Cardiac septum (tissue), 1 donor: ENCODE measurements at regions of chr1 and their contacts with region 1.

Region 1: GRCh38 chr1:168728473-168729404 is at the start of gene DPT:
- DNase-seq: no peak
- total RNA-seq, gene DPT: 32.1 TPM

Region 2: DNA sequence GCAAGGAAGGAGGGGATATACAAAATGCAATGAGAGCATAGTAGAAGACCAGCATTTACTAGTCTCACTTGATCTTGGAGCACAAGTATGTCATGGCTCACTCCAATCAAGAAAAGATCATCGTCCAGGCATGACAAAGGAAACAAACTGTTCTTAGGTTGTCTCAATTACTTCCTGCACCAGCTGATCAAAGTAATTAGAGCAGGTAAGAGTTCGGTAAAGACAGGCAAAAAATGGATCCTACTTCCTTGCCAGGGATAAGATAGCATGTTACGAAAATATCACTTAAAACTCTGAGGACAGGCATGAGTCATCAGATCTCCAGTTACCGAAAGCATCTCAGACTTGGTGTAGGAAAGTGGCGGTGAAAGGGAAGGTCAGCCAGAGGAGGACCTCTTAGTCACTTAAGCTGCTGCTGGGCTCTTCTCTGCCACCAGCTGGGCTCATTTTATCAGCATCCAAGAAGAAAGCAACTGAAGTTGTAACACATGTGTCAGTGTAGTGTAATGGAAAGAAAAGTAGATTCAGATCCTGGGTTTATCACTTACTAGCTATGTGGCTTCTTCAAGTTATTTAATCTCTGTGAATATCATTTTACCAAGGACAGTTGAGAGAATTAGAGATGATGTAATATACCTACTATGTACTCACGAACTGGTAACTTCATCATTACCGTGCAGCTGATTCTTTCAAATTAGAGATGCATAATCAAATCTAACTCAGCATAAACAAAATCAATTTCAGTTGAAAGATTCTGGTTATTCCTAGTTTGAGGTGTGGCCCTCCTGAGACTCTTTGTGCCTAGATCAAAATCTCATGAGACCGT is 105.5 kb before region 1 on chr1:
- intact Hi-C with region 1: loop called (anchors 5 kb)
- DNase-seq: no peak

Region 3: GRCh38 chr1:168673974-168674683 is 54.6 kb before region 1 on chr1:
- intact Hi-C with region 1: no loop called
- DNase-seq: no peak

Region 4: GRCh38 chr1:168767894-168768584 is 39.3 kb after region 1 on chr1:
- intact Hi-C with region 1: loop called (anchors 5 kb)
- DNase-seq: no peak